Naive thymus-derived CD4-positive, alpha-beta T cell (primary cell): ENCODE measurements at regions of chr17 and their contacts with region 1.

Region 1: GRCh38 chr17:47895856-47896671 is at the start of gene SP2:
- DNase-seq: peak; percentile 96 to 100 (median 100)
- ATAC-seq: peak; percentile 92
- H3K4me3 ChIP-seq: peak within 1 kb of the TSS; percentile 80
- H3K4me3 Mint-ChIP-seq: peak within 1 kb of the TSS; percentile 88 to 100 (median 97)
- H3K27ac ChIP-seq: peak within 1 kb of the TSS; percentile 98
- H3K27ac Mint-ChIP-seq: peak within 1 kb of the TSS; percentile 98 to 100 (median 99)
- H3K4me1 ChIP-seq: peaks cover 20 to 23% of the 10 kb centered on the region in 2 donors
- H3K4me1 Mint-ChIP-seq: peaks cover 31 to 66% (median 57%) of the 10 kb centered on the region in 7 donors
- H3K27me3 ChIP-seq: no peaks in the 10 kb centered on the region
- H3K27me3 Mint-ChIP-seq: peaks cover 0 to 4% (median 0%) of the 10 kb centered on the region in 5 donors
- total RNA-seq, gene SP2: 25.2 to 36.5 (median 30.8) TPM

Region 2: GRCh38 chr17:47649153-47649971 is 246.7 kb before region 1 on chr17 and contains the start of gene KPNB1:
- CTCF ChIA-PET with region 1: no interaction called
- POLR2A ChIA-PET with region 1: interaction called, 11 read pairs
- intact Hi-C with region 1: loop called (anchors 1 to 5 kb)
- DNase-seq: peak; percentile 85 to 97 (median 97)
- ATAC-seq: peak; percentile 90
- H3K4me3 ChIP-seq: peak within 1 kb of the TSS; percentile 55
- H3K4me3 Mint-ChIP-seq: peak within 1 kb of the TSS; percentile 92 to 100 (median 99)
- H3K27ac ChIP-seq: peak within 1 kb of the TSS; percentile 80
- H3K27ac Mint-ChIP-seq: peak within 1 kb of the TSS; percentile 92 to 100 (median 98)
- H3K4me1 ChIP-seq: peaks cover 26 to 34% of the 10 kb centered on the region in 2 donors
- H3K4me1 Mint-ChIP-seq: peaks cover 40 to 67% (median 53%) of the 10 kb centered on the region in 7 donors
- H3K27me3 ChIP-seq: no peaks in the 10 kb centered on the region
- H3K27me3 Mint-ChIP-seq: no peaks in the 10 kb centered on the region
- total RNA-seq, gene KPNB1: 185 to 465 (median 255) TPM

Region 3: GRCh38 chr17:47821424-47822391 is 74.4 kb before region 1 on chr17 and contains the start of gene OSBPL7:
- CTCF ChIA-PET with region 1: interaction called, 5 read pairs
- POLR2A ChIA-PET with region 1: interaction called, 14 read pairs
- intact Hi-C with region 1: loop called in 1 of 2 experiments (anchors 1 kb)
- DNase-seq: peak; percentile 44 to 71 (median 66)
- ATAC-seq: peak; percentile 96
- H3K4me3 ChIP-seq: peak within 1 kb of the TSS; percentile 78
- H3K4me3 Mint-ChIP-seq: peak within 1 kb of the TSS; percentile 96 to 99 (median 97)
- H3K27ac ChIP-seq: peak within 1 kb of the TSS; percentile 80
- H3K27ac Mint-ChIP-seq: peak within 1 kb of the TSS; percentile 86 to 96 (median 91)
- H3K4me1 ChIP-seq: peaks cover 5 to 23% of the 10 kb centered on the region in 2 donors
- H3K4me1 Mint-ChIP-seq: peaks cover 7 to 33% (median 24%) of the 10 kb centered on the region in 7 donors
- H3K27me3 ChIP-seq: no peaks in the 10 kb centered on the region
- H3K27me3 Mint-ChIP-seq: no peaks in the 10 kb centered on the region
- total RNA-seq, gene OSBPL7: 36.6 to 46.1 (median 41.4) TPM

Region 4: DNA sequence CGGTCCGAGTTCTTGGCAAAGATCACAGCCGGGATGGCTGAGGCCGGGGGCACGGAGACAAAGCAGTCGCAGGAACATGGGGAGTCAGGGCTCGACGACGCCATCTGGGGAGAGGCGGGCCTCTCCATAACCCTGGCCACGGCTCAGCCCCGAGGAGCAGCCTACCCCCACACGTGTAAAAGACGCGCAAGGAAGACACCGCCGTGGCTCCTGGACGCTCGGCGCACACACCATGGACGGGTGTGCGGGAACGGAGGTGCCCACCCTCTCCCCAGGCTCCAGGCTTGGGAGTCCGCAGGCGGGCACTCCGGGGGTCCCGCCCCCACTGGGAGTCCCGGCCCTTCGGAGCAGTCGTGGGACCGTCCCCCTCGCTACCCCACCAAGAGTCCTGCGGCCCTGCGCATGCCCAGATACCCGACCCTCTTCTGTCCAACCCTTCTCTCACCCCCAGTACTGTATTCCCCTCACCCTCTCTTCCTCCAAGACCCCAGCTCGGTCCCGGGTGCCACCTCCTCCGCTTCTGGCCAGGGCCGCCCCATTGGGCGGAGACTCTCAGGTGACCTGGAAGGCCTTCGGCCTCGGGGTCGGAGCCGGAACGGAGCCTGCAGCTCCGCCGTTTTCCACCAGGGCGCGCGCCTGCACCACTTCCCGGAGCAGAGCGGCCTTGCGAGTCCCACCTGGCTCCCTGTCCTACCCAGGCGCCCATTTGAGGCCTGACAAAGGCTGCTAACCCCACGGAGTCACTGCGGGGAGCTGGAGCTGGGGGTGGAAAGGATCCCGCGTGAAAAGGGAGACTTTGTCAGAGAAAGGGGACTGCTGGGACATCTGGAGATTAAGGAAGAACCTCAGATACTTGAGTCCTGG is 55.1 kb before region 1 on chr17 and contains the start of gene SCRN2:
- CTCF ChIA-PET with region 1: interaction called, 290 read pairs
- POLR2A ChIA-PET with region 1: interaction called, 42 read pairs
- intact Hi-C with region 1: loop called (anchors 1 kb)
- DNase-seq: peak; percentile 71 to 94 (median 81)
- ATAC-seq: peak; percentile 94
- H3K4me3 ChIP-seq: peak within 1 kb of the TSS; percentile 95
- H3K4me3 Mint-ChIP-seq: peak within 1 kb of the TSS; percentile 84 to 99 (median 94)
- H3K27ac ChIP-seq: peak within 1 kb of the TSS; percentile 75
- H3K27ac Mint-ChIP-seq: peak within 1 kb of the TSS; percentile 55 to 93 (median 86)
- H3K4me1 ChIP-seq: peaks cover 19 to 21% of the 10 kb centered on the region in 2 donors
- H3K4me1 Mint-ChIP-seq: peaks cover 9 to 49% (median 38%) of the 10 kb centered on the region in 7 donors
- H3K27me3 ChIP-seq: peaks cover 0 to 7% of the 10 kb centered on the region in 2 donors
- H3K27me3 Mint-ChIP-seq: peaks cover 6 to 23% (median 18%) of the 10 kb centered on the region in 5 donors
- total RNA-seq, gene SCRN2: 33.4 to 55.9 (median 41.4) TPM

Region 5: DNA sequence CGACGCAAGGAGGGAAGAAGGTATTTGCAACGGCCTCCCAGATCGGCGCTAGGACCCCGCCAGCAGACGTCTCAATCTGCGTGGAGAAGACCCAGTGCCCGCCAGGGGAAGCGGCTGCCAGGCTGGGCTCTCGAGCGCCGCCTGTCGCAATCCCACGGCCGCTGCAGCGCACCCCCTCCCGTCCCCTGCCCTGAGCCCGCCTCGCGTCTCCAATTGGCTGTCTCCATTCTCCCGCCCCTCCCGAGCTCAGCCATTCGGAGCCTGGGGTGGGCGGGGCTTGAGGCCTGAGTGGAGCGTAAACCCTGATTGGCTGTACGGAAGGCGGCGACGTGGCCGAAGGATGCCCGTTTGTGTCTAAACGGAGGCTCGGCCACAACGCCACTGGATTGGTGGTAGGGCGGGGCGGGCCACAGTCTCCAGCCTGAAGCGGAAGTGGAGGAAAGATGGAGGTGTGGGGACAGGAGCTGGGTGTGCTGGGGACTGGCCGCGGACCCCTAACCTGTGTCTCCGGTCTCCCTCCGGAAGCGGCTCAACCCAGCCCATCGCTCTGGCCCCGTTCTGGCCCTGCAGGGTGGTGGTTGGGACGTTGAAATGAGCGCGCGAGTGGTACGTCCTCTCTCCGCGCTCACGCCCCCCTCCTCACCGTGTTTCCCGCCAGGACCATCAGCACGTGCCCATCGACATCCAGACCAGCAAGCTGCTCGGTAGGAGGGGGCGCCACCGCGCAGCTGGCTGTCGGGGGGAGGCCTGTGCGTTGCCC is 74.8 kb after region 1 on chr17 and contains the start of gene CDK5RAP3:
- CTCF ChIA-PET with region 1: interaction called, 6 read pairs
- POLR2A ChIA-PET with region 1: interaction called, 27 read pairs
- intact Hi-C with region 1: loop called (anchors 1 kb)
- DNase-seq: peak; percentile 93 to 99 (median 97)
- ATAC-seq: peak; percentile 100
- H3K4me3 ChIP-seq: peak within 1 kb of the TSS; percentile 96
- H3K4me3 Mint-ChIP-seq: peak within 1 kb of the TSS; percentile 95 to 100 (median 99)
- H3K27ac ChIP-seq: peak within 1 kb of the TSS; percentile 71
- H3K27ac Mint-ChIP-seq: peak within 1 kb of the TSS; percentile 83 to 96 (median 93)
- H3K4me1 ChIP-seq: peaks cover 6 to 12% of the 10 kb centered on the region in 2 donors
- H3K4me1 Mint-ChIP-seq: peaks cover 14 to 41% (median 26%) of the 10 kb centered on the region in 7 donors
- H3K27me3 ChIP-seq: no peaks in the 10 kb centered on the region
- H3K27me3 Mint-ChIP-seq: no peaks in the 10 kb centered on the region
- total RNA-seq, gene CDK5RAP3: 238 to 349 (median 276) TPM

Region 6: GRCh38 chr17:48107168-48108132 is 211.4 kb after region 1 on chr17 and contains the start of gene SNX11:
- CTCF ChIA-PET with region 1: no interaction called
- POLR2A ChIA-PET with region 1: interaction called, 4 read pairs
- intact Hi-C with region 1: loop called (anchors 1 kb)
- DNase-seq: peak; percentile 85 to 97 (median 94)
- ATAC-seq: peak; percentile 96
- H3K4me3 ChIP-seq: peak within 1 kb of the TSS; percentile 97
- H3K4me3 Mint-ChIP-seq: peak within 1 kb of the TSS; percentile 92 to 99 (median 96)
- H3K27ac ChIP-seq: peak within 1 kb of the TSS; percentile 89
- H3K27ac Mint-ChIP-seq: peak within 1 kb of the TSS; percentile 89 to 96 (median 93)
- H3K4me1 ChIP-seq: peaks cover 19 to 20% of the 10 kb centered on the region in 2 donors
- H3K4me1 Mint-ChIP-seq: peaks cover 45 to 68% (median 62%) of the 10 kb centered on the region in 7 donors
- H3K27me3 ChIP-seq: no peaks in the 10 kb centered on the region
- H3K27me3 Mint-ChIP-seq: no peaks in the 10 kb centered on the region
- total RNA-seq, gene SNX11: 12.3 to 35.1 (median 16.7) TPM